Dendritic cell treated with granulocyte-macrophage colony-stimulating factor and Interleukin-4, amounts not matched to agents 40 ng/mL and 50 ng/mL, for 4 days (primary cell): ENCODE measurements at regions of chr14 and their contacts with region 1.

Region 1: DNA sequence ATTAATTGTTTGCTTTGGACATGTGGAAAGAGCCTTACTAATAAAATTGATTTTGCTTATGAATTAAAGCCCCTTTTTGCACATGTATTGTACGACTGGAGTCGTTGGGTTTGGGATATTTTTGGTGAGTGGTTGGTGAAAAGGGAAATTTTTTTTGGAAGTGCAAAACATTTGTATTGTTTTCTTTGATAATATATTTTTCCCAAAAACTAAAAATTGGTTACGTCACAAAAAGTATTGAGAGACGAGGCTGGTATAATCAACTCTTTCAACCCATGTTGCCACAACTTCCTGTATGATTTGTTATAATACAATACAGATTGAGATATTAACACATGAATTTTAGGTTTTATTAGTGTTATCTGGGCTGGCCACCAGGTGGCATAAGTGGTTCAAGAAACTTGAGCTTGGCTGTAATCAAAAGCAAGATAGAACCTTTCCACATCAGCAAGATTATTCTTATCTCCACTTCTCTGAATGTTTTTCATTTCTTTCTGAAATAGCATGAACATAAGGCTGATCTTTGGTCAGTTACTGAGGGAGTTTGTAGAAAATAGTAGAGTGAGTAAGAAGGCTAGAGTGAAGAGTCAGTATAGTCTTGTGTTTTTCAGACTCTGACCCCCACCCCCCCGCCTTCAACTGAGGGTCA is 8.7 kb downstream of the NGDN start:
- H3K4me3 Mint-ChIP-seq: no peak overlapping the region
- H3K27ac Mint-ChIP-seq: no peak overlapping the region
- H3K4me1 Mint-ChIP-seq: no peaks in the 10 kb centered on the region
- H3K27me3 Mint-ChIP-seq: no peaks in the 10 kb centered on the region

Region 2: GRCh38 chr14:23539248-23540140 is 61.3 kb after region 1 on chr14:
- intact Hi-C with region 1: loop called (anchors 1 kb)
- H3K4me3 Mint-ChIP-seq: no peak overlapping the region
- H3K27ac Mint-ChIP-seq: no peak overlapping the region
- H3K4me1 Mint-ChIP-seq: peaks cover 19% of the 10 kb centered on the region
- H3K27me3 Mint-ChIP-seq: peaks cover 2% of the 10 kb centered on the region

Region 3: DNA sequence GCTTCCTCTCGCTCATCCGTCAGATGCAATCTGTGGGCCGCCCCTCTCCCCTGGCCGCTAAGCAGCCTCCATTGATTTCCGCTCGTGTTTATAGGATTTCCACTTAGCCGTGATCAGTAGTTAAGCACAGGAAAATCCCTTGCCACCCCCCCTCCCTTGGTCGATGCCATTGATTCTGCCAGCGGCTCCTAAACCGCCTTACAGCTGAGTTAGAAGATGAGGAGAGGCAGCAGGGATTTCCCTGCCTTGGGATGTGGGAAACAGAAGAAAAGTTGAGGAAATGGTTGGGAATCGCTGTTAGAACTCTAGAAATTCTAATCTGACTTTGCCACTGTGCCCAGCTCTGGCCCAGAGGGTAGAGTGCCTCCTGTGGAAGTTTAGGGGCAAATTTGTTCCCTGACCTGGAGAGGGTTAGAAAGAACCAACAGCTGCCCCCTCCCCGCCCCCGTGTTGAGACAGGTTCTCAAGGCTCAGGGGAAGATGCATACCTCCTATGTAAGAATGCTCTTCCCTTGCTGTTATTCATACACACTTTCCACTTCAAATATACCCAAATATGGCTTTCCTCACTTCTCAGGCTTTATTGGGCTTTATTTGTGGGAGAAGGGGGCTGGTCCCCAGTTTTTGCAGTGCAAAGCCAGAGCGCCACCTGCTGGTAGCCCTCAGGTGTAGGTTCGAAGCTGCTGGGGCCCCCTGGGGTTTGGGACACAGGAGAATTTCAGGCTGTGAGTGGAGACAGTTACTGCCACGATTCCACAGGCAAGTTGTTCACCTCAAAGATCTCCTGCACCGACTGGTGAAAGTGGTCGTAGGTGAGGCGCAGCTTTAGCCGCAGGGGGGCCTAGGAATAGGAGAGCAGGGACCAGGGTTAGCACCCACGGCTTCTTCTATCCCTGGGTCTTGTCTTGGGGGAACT is 81.0 kb after region 1 on chr14:
- intact Hi-C with region 1: loop called (anchors 1 kb)
- H3K4me3 Mint-ChIP-seq: no peak overlapping the region
- H3K27ac Mint-ChIP-seq: peak overlapping the region; percentile 13
- H3K4me1 Mint-ChIP-seq: peaks cover 73% of the 10 kb centered on the region
- H3K27me3 Mint-ChIP-seq: no peaks in the 10 kb centered on the region

Region 4: GRCh38 chr14:23567192-23568020 is 89.2 kb after region 1 on chr14 and contains the start of gene AP1G2:
- intact Hi-C with region 1: loop called (anchors 1 kb)
- H3K4me3 Mint-ChIP-seq: peak within 1 kb of the TSS; percentile 97
- H3K27ac Mint-ChIP-seq: peak within 1 kb of the TSS; percentile 92
- H3K4me1 Mint-ChIP-seq: peaks cover 89% of the 10 kb centered on the region
- H3K27me3 Mint-ChIP-seq: no peaks in the 10 kb centered on the region